Head of caudate nucleus (tissue), 42 donors: ENCODE measurements at regions of chr2 and their contacts with region 1.

Region 1: GRCh38 chr2:18626256-18626668 is 36.9 kb upstream of the NT5C1B start:
- DNase-seq: no peak

Region 2: DNA sequence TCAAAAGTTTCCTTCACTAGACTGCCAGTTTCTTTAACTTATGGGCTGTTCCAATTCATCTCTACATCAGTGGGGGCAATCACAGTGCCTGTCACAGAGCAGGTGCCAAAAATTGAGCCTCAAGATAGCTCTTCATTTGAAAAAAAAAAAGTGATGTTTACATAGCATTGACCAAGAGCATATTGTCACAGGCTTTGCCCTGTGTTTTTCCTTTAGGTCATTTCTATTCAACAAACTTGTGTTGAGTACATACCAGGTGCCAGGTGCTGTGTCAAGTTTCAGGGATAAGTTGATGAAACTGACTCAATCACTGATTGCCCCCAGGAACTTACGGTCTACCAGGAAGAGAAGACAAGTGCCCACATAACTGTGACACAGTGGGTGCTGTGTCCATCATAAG is 14.7 kb before region 1 on chr2:
- intact Hi-C with region 1: loop called (anchors 2 kb)
- DNase-seq: no peak

Region 3: DNA sequence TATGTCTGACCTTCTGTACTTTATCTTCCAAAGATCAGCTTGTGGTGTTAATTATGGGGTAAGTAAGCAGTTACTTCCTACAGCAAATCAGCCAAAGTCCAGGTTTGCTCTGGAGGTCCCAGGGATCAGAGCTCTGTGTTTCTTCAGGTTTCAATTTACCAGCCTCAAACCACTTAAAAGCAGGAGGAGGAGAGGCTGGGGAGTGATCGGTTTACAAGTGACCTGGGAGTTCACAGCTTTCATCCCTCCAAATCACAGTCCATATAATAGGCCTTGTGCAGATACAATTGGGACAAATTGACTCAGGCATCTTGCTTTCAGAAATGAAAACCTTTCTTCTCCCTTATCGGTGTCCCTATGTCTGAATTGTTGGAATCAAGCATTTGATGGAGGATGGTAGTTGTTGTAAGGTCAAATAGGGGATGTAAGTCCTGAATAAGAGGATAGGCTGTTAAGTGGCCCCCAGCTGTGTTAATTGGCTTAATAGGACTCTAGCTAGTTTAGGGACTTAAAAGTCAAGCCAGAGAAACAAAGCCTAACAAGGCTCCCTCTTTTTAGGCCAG is 151.1 kb after region 1 on chr2:
- intact Hi-C with region 1: no loop called
- DNase-seq: no peak